ENCODE measurements at regions of chr7 and their contacts with region 1.

Region 1: GRCh38 chr7:118153551-118154177 is 30.3 kb upstream of the LSM8 start:
- DNase-seq: peak; percentile 54
- H3K4me3 Mint-ChIP-seq: no peak overlapping the region
- H3K27ac Mint-ChIP-seq: no peak overlapping the region
- H3K4me1 Mint-ChIP-seq: no peaks in the 10 kb centered on the region
- H3K27me3 Mint-ChIP-seq: peaks cover 19% of the 10 kb centered on the region
- CTCF ChIP-seq: peak; percentile 32

Region 2: GRCh38 chr7:117600911-117601310 is 552.8 kb before region 1 on chr7:
- CTCF ChIA-PET with region 1: no interaction called
- intact Hi-C with region 1: loop called (anchors 10 kb)
- DNase-seq: no peak
- H3K4me3 Mint-ChIP-seq: no peak overlapping the region
- H3K27ac Mint-ChIP-seq: no peak overlapping the region
- H3K4me1 Mint-ChIP-seq: peaks cover 20% of the 10 kb centered on the region
- H3K27me3 Mint-ChIP-seq: no peaks in the 10 kb centered on the region
- CTCF ChIP-seq: no peak

Region 3: GRCh38 chr7:117673839-117674238 is 479.8 kb before region 1 on chr7:
- CTCF ChIA-PET with region 1: no interaction called
- intact Hi-C with region 1: loop called (anchors 10 kb)
- DNase-seq: no peak
- H3K4me3 Mint-ChIP-seq: no peak overlapping the region
- H3K27ac Mint-ChIP-seq: peak overlapping the region; percentile 30
- H3K4me1 Mint-ChIP-seq: peaks cover 37% of the 10 kb centered on the region
- H3K27me3 Mint-ChIP-seq: no peaks in the 10 kb centered on the region
- CTCF ChIP-seq: no peak

Region 4: DNA sequence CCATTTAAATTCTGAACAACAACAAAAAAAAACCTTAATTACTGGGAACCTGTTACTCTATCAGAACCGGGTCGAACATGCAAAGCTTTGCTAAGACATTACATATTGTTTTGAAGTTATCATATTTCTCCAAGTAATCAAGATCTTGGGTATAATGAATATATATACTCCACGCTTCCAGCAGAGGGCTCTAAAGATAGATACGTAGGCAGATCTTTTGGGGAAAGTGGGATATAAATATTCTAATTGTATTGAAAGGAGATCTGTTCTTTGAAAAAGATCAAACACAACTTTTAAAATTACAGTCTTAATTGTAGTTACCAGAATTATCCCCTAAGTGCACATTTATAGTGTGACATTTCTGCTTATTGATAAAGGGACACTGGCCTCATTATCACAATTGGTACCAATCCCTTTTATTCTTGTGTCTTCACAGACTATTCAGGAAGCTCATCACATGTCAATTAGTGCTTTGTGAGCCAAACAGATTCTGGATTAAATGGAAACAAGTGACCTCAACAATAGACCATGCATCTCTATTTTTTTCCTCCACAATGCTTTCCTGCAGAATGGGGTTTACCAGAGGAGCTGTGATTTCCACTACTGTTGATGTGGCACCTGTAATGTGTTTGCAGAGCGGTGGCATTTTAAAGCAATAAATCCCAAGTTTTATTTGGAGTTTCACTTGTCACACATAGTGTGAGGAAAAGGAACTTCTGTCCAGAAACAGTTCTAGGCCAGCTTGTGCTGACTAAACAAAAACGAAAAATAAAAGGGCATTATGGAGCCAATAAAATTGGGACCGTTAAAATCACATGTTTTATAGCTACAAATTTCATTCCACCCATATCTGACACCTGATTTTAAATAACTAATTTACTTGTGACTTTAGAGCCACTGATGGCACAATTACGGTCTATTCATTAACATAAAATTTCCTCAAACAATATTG is 402.8 kb before region 1 on chr7:
- CTCF ChIA-PET with region 1: interaction called, 4 read pairs
- intact Hi-C with region 1: loop called (anchors 1 kb)
- DNase-seq: no peak
- H3K4me3 Mint-ChIP-seq: no peak overlapping the region
- H3K27ac Mint-ChIP-seq: no peak overlapping the region
- H3K4me1 Mint-ChIP-seq: no peaks in the 10 kb centered on the region
- H3K27me3 Mint-ChIP-seq: no peaks in the 10 kb centered on the region
- CTCF ChIP-seq: peak; percentile 61

Region 5: DNA sequence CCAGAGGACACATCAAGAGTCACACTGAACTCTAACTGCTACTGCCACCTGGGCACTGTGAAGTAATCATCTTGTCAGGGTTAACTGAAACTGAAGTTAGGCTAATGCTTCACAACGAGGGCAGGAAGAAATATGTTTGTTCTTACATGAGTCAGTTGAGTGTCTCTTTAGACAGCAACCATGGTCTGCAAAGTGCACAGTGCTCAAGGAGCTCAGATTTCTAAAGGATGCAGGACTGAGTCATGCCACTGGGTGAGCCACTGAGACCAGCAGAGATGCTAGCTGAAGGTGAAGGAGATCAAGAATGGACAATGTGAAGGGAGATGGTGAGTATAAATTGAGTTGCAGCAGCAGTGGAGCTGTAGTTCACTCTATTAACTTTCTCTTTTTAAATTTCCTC is 204.4 kb before region 1 on chr7:
- CTCF ChIA-PET with region 1: no interaction called
- intact Hi-C with region 1: loop called (anchors 5 kb)
- DNase-seq: peak; percentile 45
- H3K4me3 Mint-ChIP-seq: no peak overlapping the region
- H3K27ac Mint-ChIP-seq: no peak overlapping the region
- H3K4me1 Mint-ChIP-seq: peaks cover 58% of the 10 kb centered on the region
- H3K27me3 Mint-ChIP-seq: no peaks in the 10 kb centered on the region
- CTCF ChIP-seq: peak; percentile 31

Region 6: GRCh38 chr7:118175740-118176139 is 22.1 kb after region 1 on chr7:
- CTCF ChIA-PET with region 1: no interaction called
- intact Hi-C with region 1: no loop called
- DNase-seq: no peak
- H3K4me3 Mint-ChIP-seq: no peak overlapping the region
- H3K27ac Mint-ChIP-seq: no peak overlapping the region
- H3K4me1 Mint-ChIP-seq: no peaks in the 10 kb centered on the region
- H3K27me3 Mint-ChIP-seq: no peaks in the 10 kb centered on the region
- CTCF ChIP-seq: no peak